ENCODE measurements at regions of chr1 and their contacts with region 1.

Region 1: GRCh38 chr1:225480825-225481434 is 53.1 kb upstream of the LBR start:
- DNase-seq: peak; percentile 90
- ATAC-seq: peak; percentile 92
- H3K4me3 Mint-ChIP-seq: no peak overlapping the region
- H3K27ac Mint-ChIP-seq: 0 out of 2 replicates have a peak overlapping the region, but pooled peaks have one; percentile 21
- H3K4me1 Mint-ChIP-seq: peaks cover 16% of the 10 kb centered on the region
- H3K27me3 Mint-ChIP-seq: peaks cover 4% of the 10 kb centered on the region; the same call in 1 of the 2 replicates
- CTCF ChIP-seq: peak; percentile 92

Region 2: DNA sequence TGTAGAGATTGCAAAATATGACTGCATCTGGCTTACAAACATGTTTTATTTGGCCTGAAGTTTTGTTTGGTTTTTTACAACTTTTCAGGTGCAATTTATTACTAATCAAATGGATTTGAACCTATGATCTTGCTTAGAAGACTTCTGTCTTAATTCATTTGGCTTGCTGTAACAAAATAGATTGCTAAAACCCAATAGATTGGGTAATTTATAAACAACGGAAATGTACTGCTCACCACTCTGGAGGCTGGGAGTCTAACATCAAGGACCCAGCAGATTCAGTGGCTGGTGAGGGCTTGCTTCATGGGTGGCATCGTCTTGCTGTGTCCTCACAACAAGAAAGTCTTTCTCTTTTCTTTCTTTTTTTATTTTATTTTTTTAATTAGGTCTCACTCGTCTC is 126.0 kb before region 1 on chr1:
- CTCF ChIA-PET with region 1: no interaction called
- POLR2A ChIA-PET with region 1: no interaction called
- DNase-seq: no peak
- ATAC-seq: no peak
- H3K4me3 Mint-ChIP-seq: no peak overlapping the region
- H3K27ac Mint-ChIP-seq: no peak overlapping the region
- H3K4me1 Mint-ChIP-seq: no peaks in the 10 kb centered on the region
- H3K27me3 Mint-ChIP-seq: peaks cover 4% of the 10 kb centered on the region
- CTCF ChIP-seq: no peak

Region 3: DNA sequence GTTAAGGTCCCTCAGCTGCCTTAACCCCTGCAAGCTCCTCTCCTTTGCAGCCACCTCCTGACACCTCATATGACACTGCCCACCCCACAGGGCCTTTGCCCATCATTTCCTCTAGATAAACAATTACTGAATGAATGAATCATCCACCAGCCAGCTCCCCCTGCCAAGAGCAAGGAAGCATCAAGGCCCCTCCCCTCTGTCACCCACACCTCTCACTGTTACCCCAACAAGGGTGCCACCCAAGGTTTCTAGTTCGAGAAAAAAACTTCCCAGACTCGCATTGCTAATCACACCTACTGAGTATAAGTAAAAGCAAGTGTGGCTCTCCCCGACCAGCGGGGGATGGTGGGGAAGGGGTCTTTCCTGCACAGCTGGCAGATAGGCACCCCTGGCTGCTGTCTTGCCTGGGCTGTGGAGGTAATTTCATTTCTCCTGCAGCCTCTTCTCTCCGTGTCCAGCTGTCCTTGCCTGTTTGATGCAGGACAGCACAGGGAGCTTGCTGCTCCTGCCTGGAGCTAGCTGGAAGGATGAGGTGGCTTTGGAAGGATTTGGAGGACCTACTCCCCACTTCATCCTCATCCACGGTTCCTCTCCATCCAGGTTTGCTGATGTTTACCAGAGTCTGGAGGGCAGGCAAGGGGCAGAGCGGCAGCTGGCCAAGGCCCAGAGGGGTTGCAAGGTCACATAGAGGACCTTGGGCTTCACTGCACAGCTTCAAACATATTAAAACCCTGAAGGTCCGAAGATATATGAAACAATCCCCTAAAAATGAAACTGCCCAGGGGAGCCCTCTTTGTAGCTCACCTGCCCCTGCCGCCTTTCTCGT is 20.0 kb before region 1 on chr1:
- CTCF ChIA-PET with region 1: interaction called, 14 read pairs
- POLR2A ChIA-PET with region 1: no interaction called
- DNase-seq: no peak
- ATAC-seq: no peak
- H3K4me3 Mint-ChIP-seq: no peak overlapping the region
- H3K27ac Mint-ChIP-seq: no peak overlapping the region
- H3K4me1 Mint-ChIP-seq: peaks cover 45% of the 10 kb centered on the region
- H3K27me3 Mint-ChIP-seq: no peaks in the 10 kb centered on the region
- CTCF ChIP-seq: no peak

Region 4: GRCh38 chr1:225766967-225767633 is 286.2 kb after region 1 on chr1:
- CTCF ChIA-PET with region 1: interaction called, 99 read pairs
- POLR2A ChIA-PET with region 1: no interaction called
- DNase-seq: no peak
- ATAC-seq: no peak
- H3K4me3 Mint-ChIP-seq: no peak overlapping the region
- H3K27ac Mint-ChIP-seq: peak overlapping the region; percentile 57; the same call in 1 of the 2 replicates
- H3K4me1 Mint-ChIP-seq: peaks cover 58% of the 10 kb centered on the region
- H3K27me3 Mint-ChIP-seq: no peaks in the 10 kb centered on the region; the same call in 1 of the 2 replicates
- CTCF ChIP-seq: no peak

Region 5: DNA sequence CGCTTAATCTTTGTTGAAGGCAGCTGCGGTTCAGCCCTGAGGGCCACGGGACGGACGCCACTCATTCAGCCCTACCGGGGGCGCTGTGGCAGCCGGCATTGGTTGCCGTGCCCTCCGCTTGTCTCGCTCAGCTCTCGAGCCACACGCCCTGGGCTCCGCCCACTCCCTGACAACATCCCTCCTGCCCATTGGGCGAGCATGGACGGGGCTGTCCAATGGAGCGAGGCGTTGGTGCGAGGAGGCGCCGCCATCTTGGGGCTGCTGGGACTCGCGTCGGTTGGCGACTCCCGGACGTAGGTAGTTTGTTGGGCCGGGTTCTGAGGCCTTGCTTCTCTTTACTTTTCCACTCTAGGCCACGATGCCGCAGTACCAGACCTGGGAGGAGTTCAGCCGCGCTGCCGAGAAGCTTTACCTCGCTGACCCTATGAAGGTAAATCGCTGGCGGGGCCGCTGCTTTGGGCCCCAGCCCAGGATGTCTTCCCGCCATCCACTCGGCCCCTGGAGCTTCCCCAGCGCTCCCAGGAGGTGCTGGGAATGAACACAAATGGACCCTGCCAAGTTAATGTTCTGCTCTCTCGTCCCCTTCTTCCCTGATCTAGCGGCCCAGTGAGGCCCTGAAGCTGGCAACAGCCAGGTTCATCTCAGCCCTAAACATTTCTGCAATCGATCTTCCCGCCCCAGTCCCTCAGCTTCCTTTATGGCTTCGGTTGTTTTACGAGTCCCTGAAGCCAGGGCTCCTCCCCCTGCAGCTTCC is 296.8 kb after region 1 on chr1 and contains the start of gene SRP9:
- CTCF ChIA-PET with region 1: interaction called, 99 read pairs
- POLR2A ChIA-PET with region 1: no interaction called
- DNase-seq: peak; percentile 100
- ATAC-seq: peak; percentile 97
- H3K4me3 Mint-ChIP-seq: no peak within 1 kb of the TSS
- H3K27ac Mint-ChIP-seq: no peak within 1 kb of the TSS
- H3K4me1 Mint-ChIP-seq: peaks cover 40% of the 10 kb centered on the region
- H3K27me3 Mint-ChIP-seq: no peaks in the 10 kb centered on the region
- CTCF ChIP-seq: peak; percentile 65
- total RNA-seq, gene SRP9: 374 to 395 TPM (median 375 TPM) in 3 replicates

Region 6: GRCh38 chr1:225825607-225826007 is 344.7 kb after region 1 on chr1:
- CTCF ChIA-PET with region 1: interaction called, 17 read pairs
- POLR2A ChIA-PET with region 1: no interaction called
- DNase-seq: no peak
- ATAC-seq: no peak
- H3K4me3 Mint-ChIP-seq: no peak overlapping the region
- H3K27ac Mint-ChIP-seq: peak overlapping the region; percentile 39; the same call in 1 of the 2 replicates
- H3K4me1 Mint-ChIP-seq: peaks cover 36% of the 10 kb centered on the region
- H3K27me3 Mint-ChIP-seq: no peaks in the 10 kb centered on the region; the same call in 1 of the 2 replicates
- CTCF ChIP-seq: no peak